RWPE1 (cell line): ENCODE measurements at regions of chr1 and their contacts with region 1.

Region 1: GRCh38 chr1:205523891-205524793 is 19.7 kb downstream of the CDK18 start:
- DNase-seq: peak; percentile 91
- H3K27ac ChIP-seq: peak overlapping the region; percentile 19; the same call in 1 of the 2 replicates
- CTCF ChIP-seq: peak; percentile 75

Region 2: DNA sequence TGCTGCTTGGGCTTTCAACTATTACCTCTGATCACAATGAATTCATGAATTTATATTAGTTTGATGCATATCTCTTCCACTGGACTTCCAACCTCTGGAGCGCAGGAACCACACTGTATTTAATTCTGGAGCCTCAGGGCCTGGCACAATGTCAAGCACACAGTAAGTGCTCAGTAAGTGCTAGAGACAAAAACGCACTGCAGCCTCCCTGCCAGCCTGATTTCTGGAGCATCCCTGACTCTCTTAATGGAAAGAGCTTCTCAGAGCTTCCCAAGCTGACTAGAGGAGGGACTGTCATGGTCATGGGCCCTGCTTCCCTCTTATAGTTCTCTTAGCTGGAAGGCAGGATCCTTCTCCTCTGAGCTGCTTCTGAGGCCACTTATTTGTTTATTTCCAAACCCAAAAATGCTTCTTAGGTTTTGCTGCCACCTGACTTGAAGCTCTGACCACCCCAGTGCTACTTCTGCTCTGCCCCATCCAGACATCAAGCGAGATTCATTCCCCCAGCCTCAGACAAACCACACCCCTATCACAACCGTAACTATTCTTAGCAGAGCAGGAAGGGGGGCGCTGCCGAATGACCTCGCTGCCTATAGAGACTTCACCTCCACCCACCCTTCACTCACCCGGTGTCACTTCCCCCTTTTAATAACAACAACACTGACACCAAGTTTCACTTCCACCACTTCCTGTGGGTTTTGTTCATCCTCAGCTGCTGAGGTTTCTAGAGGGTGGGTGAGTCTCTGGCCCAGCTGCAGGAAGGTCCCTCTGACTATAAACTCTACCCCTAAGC is 236.2 kb before region 1 on chr1:
- CTCF ChIA-PET with region 1: no interaction called
- POLR2A ChIA-PET with region 1: no interaction called
- DNase-seq: no peak
- H3K27ac ChIP-seq: peak overlapping the region; percentile 45
- CTCF ChIP-seq: no peak

Region 3: DNA sequence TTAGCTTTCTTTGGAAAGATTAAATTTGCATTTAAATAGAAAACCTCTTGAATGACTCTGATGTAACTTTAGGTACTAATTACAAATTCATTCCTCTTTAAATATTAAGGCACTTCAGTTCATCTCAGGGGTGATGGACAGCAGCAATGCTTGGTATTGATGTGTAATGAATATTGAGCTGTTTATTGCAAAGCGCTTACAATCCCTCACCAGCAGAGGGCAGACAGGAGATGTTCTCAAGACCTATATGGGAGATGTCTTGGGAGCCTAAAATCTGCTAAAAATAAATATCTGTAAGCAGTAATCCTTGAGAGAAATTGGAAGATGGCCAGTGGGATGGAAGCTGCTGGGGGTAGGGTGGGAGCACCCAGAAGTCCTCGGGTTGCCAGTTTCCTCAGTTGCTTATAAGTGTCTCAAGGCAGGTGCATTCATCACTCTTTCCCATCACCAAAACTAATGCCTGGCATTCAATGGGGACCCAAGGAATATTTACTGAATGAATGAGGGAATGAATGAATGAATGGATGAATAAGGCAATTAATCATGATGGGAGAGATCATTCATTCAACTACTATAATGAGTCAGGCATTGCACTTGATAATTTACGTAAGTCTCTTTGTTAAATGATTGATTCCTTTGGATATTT is 169.8 kb before region 1 on chr1:
- CTCF ChIA-PET with region 1: interaction called, 37 read pairs
- POLR2A ChIA-PET with region 1: no interaction called
- DNase-seq: peak; percentile 50
- H3K27ac ChIP-seq: no peak overlapping the region
- CTCF ChIP-seq: peak; percentile 90

Region 4: DNA sequence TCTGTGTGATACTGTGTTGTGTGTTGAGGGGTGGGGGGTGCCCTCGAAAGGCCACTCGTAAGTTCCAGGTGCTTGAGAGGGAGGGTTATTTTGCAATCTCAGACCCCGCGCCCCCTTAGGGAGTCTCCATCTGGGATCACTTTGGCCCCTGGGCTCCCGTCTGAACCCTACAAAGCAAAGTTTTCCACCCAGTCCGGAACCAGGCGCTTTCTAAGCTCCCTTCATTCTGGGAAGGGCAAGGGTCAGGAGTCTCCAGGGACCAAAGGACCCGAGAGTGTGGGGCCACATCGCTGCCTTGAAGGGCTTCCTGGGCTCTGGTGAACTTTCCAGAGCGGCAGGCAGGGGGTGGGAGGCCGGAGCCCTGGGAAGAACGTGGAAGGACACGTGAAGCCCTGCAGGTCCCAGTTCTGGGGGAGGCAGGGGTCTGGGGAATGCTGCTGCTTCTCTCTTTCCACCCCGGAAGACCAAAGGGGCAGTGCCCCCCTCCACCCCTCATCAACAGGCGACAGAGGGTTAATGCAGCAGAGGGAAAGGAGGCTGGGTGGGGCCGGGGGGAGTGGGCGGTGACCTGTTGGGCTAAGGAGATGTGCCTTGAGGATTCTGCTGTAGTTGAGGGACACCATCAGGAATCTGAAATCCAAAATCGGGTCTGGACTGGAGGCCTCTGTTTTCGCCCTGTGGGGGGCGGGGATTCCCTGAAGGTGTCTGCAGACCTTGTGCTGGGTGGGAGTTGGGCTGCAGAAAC is 19.0 kb before region 1 on chr1:
- CTCF ChIA-PET with region 1: interaction called, 14 read pairs
- POLR2A ChIA-PET with region 1: no interaction called
- DNase-seq: peak; percentile 65
- H3K27ac ChIP-seq: peak overlapping the region; percentile 86
- CTCF ChIP-seq: no peak

Region 5: DNA sequence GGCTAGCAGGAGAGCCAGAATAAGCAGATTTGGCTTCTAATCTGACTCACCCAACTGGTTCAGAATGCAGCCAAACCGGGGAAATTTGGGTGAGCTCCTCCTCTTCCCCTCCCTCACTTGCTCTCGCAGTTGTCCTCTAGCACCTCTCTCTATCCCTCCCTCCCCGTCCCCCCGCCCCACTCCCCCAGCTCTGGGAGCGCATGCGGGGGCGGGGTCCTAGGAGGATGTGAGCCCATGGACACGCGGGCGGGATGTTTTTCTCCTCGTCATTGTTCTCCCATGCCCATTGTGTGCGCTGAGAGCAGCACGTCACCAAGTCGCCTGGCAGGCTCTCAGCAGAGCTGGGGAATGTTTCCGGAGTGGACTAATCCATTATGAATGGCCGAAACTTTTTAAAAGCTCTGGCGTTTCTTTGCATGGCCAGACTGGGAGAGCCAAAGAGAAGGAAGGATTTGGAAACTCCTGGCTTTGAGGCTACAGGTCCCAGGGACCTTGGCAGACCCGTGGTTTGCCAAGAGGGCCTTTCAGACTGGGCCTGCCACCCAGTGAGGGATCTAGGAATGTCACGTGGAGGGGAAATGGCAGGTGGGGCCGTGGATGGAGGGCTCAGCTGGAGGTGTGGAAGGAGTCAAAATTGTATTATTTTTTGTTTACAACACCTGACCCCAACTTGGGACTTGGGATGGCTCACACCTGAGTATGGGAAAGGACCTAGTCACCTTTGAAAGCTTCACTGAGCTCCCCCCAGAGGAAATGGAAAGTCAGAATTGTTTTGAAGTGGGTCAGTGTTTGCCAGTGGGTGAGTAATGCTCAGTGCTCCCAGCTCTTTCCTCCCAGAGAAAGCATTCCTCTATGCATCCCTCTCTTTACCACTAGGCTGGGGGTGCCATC is 19.5 kb after region 1 on chr1:
- CTCF ChIA-PET with region 1: interaction called, 16 read pairs
- POLR2A ChIA-PET with region 1: no interaction called
- DNase-seq: peak; percentile 83
- H3K27ac ChIP-seq: peak overlapping the region; percentile 77
- CTCF ChIP-seq: no peak

Region 6: GRCh38 chr1:205983925-205984725 is 460.0 kb after region 1 on chr1:
- CTCF ChIA-PET with region 1: no interaction called
- POLR2A ChIA-PET with region 1: no interaction called
- DNase-seq: peak; percentile 95
- H3K27ac ChIP-seq: peak overlapping the region; percentile 95
- CTCF ChIP-seq: peak; percentile 70